GM12878 (cell line): ENCODE measurements at regions of chr9 and their contacts with region 1.

Region 1: GRCh38 chr9:14428781-14429230 is 114.9 kb upstream of the NFIB start:
- DNase-seq: no peak
- ATAC-seq: peak; percentile 88
- H3K4me3 ChIP-seq: no peak overlapping the region
- H3K27ac ChIP-seq: no peak overlapping the region
- H3K4me1 ChIP-seq: no peaks in the 10 kb centered on the region
- H3K27me3 ChIP-seq: no peaks in the 10 kb centered on the region
- CTCF ChIP-seq: peak; percentile 63 to 72 (median 71)
- EP300 ChIP-seq: no peak
- POLR2A ChIP-seq: no peak
- RAD21 ChIP-seq: peak; percentile 43

Region 2: GRCh38 chr9:14415947-14416346 is 12.9 kb before region 1 on chr9:
- CTCF ChIA-PET with region 1: interaction called, 21 read pairs
- POLR2A ChIA-PET with region 1: no interaction called
- RAD21 ChIA-PET with region 1: interaction called, 3 read pairs
- SMC1A ChIA-PET with region 1: interaction called, 4 read pairs
- in situ Hi-C with region 1: no loop called
- intact Hi-C with region 1: no loop called
- DNase-seq: no peak
- ATAC-seq: no peak
- H3K4me3 ChIP-seq: no peak overlapping the region
- H3K27ac ChIP-seq: no peak overlapping the region
- H3K4me1 ChIP-seq: no peaks in the 10 kb centered on the region
- H3K27me3 ChIP-seq: no peaks in the 10 kb centered on the region; a peak in 1 of 4 replicates
- CTCF ChIP-seq: no peak
- EP300 ChIP-seq: no peak
- POLR2A ChIP-seq: no peak
- RAD21 ChIP-seq: no peak

Region 3: DNA sequence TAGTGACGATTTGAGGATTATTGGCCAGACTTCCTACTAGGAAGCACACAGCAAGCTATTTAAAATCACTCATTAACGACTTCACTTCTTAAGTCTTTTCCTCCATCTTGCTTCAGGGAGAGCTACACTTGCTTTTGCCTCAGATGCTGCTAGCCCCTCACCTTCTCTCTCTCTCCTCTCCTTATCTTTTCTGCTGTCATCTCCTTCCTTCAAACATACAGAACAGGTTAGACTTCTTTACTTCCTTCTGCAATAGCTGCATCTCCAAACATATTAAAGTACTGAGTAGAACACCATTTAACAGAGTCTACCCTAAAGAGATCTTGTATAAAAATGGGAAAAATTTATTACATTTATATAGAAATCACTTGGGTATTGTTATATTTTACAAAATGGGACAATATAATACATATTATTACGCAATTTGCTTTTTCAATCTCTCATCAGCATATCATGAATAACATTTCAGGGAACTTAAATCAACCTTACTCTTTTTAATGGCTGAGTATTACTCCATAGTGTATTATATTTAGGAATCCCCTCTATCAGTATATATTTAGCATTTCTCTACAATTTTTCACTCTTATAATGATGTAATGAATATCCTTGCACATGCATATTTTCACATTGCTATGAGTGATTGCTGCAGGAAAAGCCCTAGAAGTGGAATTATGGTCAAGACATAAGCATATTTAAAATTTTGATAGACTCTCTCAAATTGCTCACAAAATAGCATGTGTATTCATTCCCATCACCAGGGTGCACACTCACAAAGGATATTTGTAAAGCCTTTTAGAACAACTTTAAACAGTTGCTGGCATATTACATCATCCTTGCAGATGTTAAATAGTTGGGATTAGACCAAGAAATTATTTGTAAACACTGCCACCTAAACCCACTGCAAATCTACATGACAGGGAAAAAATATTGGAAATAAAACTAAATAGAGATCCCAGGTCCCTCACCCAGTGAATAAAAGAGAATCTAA is 49.7 kb after region 1 on chr9:
- CTCF ChIA-PET with region 1: no interaction called
- POLR2A ChIA-PET with region 1: no interaction called
- RAD21 ChIA-PET with region 1: no interaction called
- SMC1A ChIA-PET with region 1: no interaction called
- in situ Hi-C with region 1: no loop called
- intact Hi-C with region 1: no loop called
- DNase-seq: no peak
- ATAC-seq: no peak
- H3K4me3 ChIP-seq: no peak overlapping the region
- H3K27ac ChIP-seq: no peak overlapping the region
- H3K4me1 ChIP-seq: no peaks in the 10 kb centered on the region
- H3K27me3 ChIP-seq: no peaks in the 10 kb centered on the region; a peak in 1 of 4 replicates
- CTCF ChIP-seq: no peak
- EP300 ChIP-seq: no peak
- POLR2A ChIP-seq: no peak
- RAD21 ChIP-seq: no peak